Dorsolateral prefrontal cortex (tissue), 120 donors: ENCODE measurements at regions of chr4 and their contacts with region 1.

Region 1: DNA sequence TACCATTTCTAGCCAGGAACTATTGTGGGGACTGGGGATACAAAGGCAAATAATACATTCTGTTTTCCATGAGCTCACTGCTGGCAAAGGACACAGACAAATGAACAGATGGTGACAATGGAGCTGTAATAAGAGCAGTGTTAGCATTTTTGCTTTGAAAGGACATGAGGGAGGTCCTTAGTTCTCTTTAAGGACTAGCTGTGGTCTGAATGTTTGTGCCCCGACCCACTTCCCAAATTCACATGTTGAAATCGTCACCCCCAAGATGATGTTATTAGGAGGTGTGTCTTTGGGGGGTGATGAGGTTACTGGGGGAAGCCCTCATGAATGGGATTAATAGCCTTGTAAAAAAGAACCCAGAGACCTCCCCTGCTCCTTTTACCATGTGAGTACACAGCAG is 30.3 kb downstream of the CCNG2 start:
- DNase-seq: peak in 1 of 10 donors; percentile 50
- H3K4me3 ChIP-seq: no peak overlapping the region
- H3K27ac ChIP-seq: peak overlapping the region in 44 of 59 donors; percentile 0 to 94 (median 60)
- H3K27me3 ChIP-seq: no peaks in the 10 kb centered on the region
- CTCF ChIP-seq: no peak

Region 2: DNA sequence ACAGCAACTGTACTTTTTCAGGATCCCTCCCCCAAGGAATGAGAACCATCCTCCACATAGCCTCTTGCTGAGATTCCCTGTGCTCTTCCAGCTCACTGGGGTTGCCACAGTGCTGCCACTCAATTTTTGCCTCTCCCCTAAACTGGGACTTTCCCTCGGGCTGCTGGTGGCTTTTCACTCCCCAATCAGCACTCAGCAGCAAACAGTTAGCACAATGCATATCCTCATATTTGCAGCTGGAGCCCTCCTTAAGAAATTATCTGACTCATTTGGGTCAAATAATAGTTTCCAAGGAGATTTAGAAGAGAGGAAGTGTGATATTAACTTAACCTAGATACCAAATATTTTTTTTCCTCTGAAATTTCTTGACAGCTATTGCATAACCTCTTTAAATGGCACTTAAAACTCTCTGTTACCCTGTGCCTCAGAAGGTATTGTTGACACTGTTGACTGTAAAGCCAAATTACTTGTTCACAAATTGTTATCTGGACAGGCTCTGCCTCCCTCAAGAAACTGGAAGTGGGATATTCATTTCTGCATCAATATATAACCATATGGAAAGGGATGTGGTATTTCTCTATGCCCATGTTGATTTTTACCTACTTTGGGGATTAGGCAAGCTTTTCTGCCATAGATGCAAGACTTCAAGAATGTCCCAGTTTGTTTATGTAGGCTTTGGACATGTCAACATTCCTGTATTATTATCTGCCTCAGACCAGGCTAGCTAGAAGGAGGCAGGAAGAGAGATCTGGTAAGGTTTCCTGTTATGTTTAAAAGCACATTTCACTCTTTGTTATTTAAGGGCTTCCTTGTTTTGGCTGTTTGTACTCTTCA is 179.7 kb before region 1 on chr4:
- intact Hi-C with region 1: no loop called
- DNase-seq: no peak
- H3K4me3 ChIP-seq: no peak overlapping the region
- H3K27ac ChIP-seq: peak overlapping the region in 23 of 59 donors; percentile 4 to 57 (median 28)
- H3K27me3 ChIP-seq: no peaks in the 10 kb centered on the region
- CTCF ChIP-seq: no peak

Region 3: DNA sequence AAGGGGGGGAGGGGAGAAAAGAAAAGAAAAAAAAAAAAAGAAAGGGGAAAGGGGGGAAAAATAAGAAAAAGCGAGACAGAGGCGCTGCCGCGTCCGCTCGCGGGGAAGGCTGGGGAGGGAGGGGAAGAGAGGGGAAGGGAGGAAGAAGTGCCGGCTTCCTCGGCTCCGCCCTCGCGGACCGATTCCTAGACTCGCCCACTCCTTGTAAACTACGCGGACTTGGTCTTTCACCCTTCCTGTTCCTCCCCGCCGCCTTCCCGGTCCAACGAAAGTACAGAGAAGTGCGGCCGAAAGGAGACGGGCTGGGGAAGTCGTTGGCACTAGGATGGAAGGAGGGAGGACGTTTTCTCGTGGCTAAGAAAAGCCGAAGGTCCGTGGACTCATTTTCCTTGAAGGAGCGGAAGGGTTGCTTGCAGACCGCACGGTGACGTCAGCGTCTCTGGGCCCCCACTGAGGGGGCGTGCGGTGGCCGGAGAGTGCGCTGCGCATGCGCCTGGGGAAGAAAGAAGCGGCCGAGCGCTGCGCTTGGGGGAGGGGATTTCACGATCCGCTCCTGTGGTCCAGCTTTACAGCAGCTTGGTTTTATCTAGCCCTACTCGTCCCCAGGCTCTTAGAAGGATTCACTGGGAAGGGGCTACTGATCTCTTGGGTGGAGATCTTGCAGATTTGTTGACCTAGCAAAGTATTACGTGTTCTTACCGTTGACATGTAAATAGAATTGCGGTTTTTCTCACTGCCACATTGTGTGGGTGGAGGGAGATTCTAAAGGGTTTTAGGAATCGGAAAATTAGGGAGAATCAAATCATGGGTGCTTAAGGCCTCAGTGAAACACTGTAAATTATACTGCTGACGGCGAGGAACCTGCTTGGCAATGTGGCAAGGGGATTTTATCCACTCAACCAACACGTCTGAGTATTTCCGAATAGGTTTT is 111.2 kb before region 1 on chr4 and contains the start of gene CCNI:
- intact Hi-C with region 1: loop called in 1 of 2 experiments (anchors 10 kb)
- DNase-seq: peak; percentile 85 to 94 (median 93)
- H3K4me3 ChIP-seq: peak within 1 kb of the TSS; percentile 46 to 97 (median 83)
- H3K27ac ChIP-seq: peak within 1 kb of the TSS; percentile 92 to 100 (median 99)
- H3K27me3 ChIP-seq: no peaks in the 10 kb centered on the region
- CTCF ChIP-seq: peak in 16 of 56 donors; percentile 6 to 41 (median 28)
- total RNA-seq, gene CCNI: 250 to 549 (median 371) TPM

Region 4: DNA sequence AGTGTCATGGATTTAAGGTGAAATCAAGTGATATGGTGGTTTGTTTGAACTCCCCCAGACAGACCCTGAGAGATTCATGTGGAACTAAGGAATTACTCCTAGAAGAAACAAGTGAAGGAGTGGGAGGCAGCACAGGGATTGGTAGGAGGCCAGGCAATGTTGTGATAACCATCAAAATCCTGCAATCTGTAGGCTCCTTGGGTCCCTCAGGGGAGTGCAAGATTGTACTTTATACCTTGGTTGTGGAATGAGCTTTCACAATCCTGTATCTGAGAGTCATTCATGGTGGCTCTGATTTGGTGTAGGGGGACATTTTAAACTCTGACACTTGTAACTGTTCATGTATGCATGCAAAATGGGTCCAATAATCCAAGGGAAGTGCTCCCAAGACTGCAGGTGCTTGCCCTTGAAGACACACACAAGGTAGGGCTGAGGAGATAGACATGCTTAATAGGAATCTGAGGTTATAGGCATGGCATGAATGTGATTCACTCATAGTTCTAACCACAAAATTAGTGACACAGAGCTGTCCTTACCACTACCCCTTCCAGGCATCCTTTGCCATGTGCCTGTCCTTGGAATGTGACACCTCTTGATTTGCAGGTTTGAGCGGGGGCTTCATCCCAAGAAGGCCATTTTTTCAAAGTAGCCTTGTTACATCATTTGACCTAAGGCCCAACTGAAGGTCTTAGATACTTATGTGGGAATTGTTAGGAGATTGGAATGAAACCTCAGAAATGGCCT is 82.0 kb after region 1 on chr4:
- intact Hi-C with region 1: no loop called
- DNase-seq: no peak
- H3K4me3 ChIP-seq: no peak overlapping the region
- H3K27ac ChIP-seq: no peak overlapping the region
- H3K27me3 ChIP-seq: no peaks in the 10 kb centered on the region
- CTCF ChIP-seq: no peak

Region 5: GRCh38 chr4:77433418-77433733 is 246.1 kb after region 1 on chr4:
- intact Hi-C with region 1: no loop called
- DNase-seq: no peak
- H3K4me3 ChIP-seq: peak overlapping the region in 4 of 59 donors; percentile 3 to 16 (median 8)
- H3K27ac ChIP-seq: peak overlapping the region in 5 of 59 donors; percentile 3 to 47 (median 25)
- H3K27me3 ChIP-seq: no peaks in the 10 kb centered on the region
- CTCF ChIP-seq: peak; percentile 35 to 85 (median 68)

Region 6: DNA sequence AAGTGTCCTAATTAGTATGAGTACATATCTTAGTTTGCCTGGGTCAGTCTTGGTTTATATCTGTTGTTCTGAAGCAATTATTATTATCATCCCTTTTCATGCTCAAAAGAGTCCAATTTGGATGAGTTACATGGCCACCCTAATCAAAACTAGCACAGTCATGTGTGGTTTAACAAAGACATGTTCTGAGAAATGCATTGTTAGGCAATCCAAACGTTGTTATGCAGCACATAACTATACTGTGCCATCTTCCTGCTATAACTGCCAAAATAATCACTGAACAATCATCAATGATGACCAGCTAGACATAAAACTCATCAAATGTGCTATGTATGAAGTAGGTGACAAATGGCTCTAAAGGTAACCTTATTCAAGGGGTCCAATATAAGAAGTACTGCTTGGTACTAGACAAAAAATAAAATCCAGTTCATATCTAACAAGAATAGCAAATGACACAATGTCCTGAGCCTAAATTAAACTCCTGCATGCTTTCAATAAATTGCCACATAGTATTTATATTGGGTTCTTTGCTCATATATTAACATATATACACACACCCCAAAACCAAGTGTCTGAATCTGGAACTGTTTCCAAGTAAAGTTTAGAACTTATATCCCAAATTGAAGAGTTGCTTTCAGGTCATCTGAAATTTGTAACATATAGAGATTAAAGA is 589.9 kb after region 1 on chr4:
- intact Hi-C with region 1: no loop called
- DNase-seq: no peak
- H3K4me3 ChIP-seq: peak overlapping the region in 14 of 59 donors; percentile 0 to 48 (median 14)
- H3K27ac ChIP-seq: peak overlapping the region in 9 of 59 donors; percentile 9 to 53 (median 25)
- H3K27me3 ChIP-seq: no peaks in the 10 kb centered on the region
- CTCF ChIP-seq: no peak